ENCODE measurements at regions of chr17 and their contacts with region 1.

Region 1: DNA sequence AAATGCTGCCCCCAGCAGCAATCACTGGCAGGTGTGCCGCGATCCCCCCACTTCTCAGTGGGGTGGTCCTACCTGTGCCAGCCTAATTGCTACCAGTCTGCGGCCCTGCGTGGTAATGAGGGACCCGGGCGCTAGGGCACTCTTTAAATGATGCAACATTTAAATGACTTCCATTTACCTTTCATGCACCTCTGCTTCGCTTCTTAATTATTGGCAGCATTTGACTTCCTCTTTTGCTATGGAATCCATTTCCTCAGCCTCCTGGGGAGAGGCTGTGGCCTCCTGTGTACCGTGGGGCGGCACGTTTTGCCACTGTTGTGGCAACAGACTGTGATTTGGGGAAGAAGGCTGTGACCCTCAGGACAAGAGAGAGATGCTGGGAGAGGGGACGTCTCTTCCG is 86.1 kb downstream of the RPA1 start:
- DNase-seq: no peak

Region 2: GRCh38 chr17:2023692-2024571 is 108.0 kb after region 1 on chr17:
- intact Hi-C with region 1: loop called in 1 of 2 experiments (anchors 5 kb)
- DNase-seq: peak; percentile 90

Measured in posterior vena cava (tissue), 2 donors.